ENCODE measurements at regions of chr6 and their contacts with region 1.

Region 1: GRCh38 chr6:152957796-152958195 is 25.0 kb downstream of the FBXO5 start:
- H3K4me3 Mint-ChIP-seq: no peak overlapping the region
- H3K27ac Mint-ChIP-seq: no peak overlapping the region
- H3K4me1 Mint-ChIP-seq: no peaks in the 10 kb centered on the region
- H3K27me3 Mint-ChIP-seq: no peaks in the 10 kb centered on the region

Region 2: GRCh38 chr6:153015094-153015640 is 57.4 kb after region 1 on chr6:
- intact Hi-C with region 1: loop called (anchors 5 kb)
- H3K4me3 Mint-ChIP-seq: no peak overlapping the region
- H3K27ac Mint-ChIP-seq: no peak overlapping the region
- H3K4me1 Mint-ChIP-seq: no peaks in the 10 kb centered on the region
- H3K27me3 Mint-ChIP-seq: peaks cover 1% of the 10 kb centered on the region

Measured in dendritic cell treated with granulocyte-macrophage colony-stimulating factor and Interleukin-4, amounts not matched to agents 40 ng/mL and 50 ng/mL, for 4 days (primary cell).